WTC11 (cell line): ENCODE measurements at regions of chr16 and their contacts with region 1.

Region 1: GRCh38 chr16:31179747-31180459 is at the start of gene FUS:
- DNase-seq: peak; percentile 86
- ATAC-seq: peak; percentile 60
- H3K4me3 Mint-ChIP-seq: peak within 1 kb of the TSS; percentile 95
- H3K27ac Mint-ChIP-seq: peak within 1 kb of the TSS; percentile 100
- H3K4me1 Mint-ChIP-seq: peaks cover 31% of the 10 kb centered on the region
- H3K27me3 Mint-ChIP-seq: no peaks in the 10 kb centered on the region
- CTCF ChIP-seq: no peak
- total RNA-seq, gene FUS: 631 to 770 TPM (median 679 TPM) in 3 replicates

Region 2: DNA sequence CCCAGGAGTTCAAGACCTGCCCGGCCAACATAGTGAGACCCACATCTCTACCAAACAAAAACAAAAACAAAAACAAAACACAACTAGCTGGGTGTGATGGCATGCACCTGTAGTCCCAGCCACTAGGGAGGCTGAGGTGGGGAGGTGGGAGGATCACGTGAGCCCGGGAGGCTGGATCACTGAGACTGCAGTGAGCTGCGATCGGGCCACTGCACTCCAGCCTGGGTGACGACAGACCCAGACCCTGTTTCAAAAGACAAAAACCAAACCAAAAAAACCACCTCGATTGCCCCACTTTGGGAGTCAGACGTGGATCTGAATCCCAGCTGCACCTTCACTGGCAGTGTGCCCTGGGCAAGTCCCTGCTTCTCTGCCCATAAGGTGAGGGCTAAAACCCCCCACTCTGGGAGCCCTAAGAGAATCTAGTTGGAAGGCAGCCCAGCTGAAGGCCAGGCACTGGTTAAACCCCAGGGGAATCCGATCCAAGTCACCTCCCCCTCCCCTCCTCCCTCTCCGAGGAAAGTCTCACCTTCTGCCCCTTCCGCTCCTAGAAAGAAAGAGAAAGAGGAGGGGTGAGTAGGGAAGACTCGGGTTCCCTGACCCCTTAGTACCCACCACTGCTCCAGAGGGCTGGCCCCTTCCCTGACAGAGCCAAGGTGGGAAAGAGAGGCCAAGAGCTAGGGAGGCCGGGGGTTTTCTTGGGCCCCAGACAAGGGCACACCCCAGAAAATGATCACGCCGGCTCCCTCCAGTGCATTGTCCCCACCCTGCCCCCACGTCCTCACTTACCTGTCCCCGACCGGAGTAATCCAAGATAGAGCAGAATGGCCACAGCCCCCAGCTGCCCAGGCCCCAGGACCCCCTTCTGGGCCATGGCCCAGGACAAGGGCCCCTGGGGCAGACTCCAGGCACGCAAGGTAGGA is 45.0 kb before region 1 on chr16:
- CTCF ChIA-PET with region 1: no interaction called
- POLR2A ChIA-PET with region 1: interaction called, 10 read pairs
- DNase-seq: peak; percentile 63
- ATAC-seq: peak; percentile 56
- H3K4me3 Mint-ChIP-seq: peak overlapping the region; percentile 87
- H3K27ac Mint-ChIP-seq: peak overlapping the region; percentile 98
- H3K4me1 Mint-ChIP-seq: peaks cover 67% of the 10 kb centered on the region
- H3K27me3 Mint-ChIP-seq: no peaks in the 10 kb centered on the region
- CTCF ChIP-seq: no peak

Region 3: DNA sequence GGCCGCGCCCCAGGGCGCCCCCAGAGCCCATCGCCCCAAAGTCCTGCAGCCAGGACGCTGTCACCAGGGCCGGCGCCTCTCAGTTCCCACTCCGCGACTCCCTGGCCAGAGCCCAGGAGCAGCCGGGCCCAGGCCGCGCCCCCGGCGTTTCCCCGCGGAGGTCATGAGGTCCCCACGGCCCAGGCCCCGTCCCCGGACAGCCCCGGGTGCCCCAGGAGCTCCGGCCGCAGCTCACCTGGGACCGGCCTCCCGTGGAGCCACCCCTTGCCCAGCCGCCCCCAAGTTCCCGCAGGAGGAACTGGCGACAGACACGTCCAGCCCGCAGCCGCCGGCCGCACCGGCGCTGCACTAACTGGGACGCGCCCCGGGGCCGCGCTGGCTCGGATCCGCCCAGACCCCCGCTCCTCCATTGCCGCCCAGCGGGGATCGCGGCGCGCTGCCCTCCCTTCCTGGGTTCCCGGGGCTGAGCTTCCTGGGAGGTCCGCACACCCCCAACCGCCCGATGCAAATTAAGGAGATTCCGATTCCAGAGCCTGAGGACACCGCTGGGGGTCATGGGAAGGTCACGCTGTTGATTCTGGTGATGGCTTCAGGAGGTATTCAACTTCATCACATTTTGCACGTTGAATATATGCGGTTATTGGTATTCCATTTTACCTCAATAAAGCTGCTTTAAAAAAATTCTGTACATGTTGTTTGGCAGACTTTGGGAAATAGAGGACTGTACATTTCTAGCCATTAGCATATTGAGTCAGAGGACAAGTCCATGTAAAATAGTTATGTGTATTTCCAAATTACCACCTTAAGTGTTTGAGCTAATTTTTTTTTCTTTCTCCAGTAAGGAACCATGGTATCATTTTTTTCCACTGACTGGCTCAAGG is 357.7 kb after region 1 on chr16:
- CTCF ChIA-PET with region 1: no interaction called
- POLR2A ChIA-PET with region 1: no interaction called
- DNase-seq: peak; percentile 56
- ATAC-seq: peak; percentile 55
- H3K4me3 Mint-ChIP-seq: peak overlapping the region; percentile 58
- H3K27ac Mint-ChIP-seq: no peak overlapping the region
- H3K4me1 Mint-ChIP-seq: no peaks in the 10 kb centered on the region
- H3K27me3 Mint-ChIP-seq: peaks cover 26% of the 10 kb centered on the region
- CTCF ChIP-seq: no peak